ENCODE measurements at regions of chr13 and their contacts with region 1.

Region 1: DNA sequence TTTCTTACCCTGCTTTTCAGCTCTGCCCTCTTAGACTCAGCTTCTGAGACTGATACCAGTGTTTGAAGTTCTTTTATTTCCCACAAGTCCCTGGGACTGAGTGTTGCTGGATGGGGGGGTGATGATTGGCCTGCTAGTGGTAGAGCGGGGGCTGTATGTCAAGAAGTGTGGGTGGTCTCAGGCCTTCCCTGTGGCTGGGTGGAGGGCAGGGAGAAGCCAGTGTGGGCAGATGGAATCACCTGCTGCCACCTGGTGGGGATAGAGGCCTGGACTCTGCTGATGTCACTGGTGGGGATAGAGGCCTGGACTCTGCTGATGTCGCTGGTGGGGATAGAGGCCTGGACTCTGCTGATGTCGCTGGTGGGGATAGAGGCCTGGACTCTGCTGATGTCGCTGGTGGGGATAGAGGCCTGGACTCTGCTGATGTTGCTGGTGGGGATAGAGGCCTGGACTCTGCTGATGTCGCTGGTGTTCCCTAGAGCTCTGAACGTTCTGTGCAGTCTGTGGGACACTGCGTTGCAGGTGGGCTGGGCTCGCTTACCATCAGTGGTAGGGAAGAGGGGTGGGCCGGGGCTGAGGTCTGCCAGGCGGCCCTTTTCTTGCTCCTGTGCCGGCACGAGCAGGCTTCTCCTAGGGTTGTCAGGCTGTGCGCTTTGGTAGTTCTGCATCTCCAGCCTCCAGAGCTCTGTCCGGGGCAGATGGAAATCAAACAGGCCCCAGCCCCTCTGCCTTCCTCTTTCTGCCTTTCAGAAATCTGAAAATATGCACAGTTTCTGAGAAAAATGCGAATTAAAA is 101.3 kb downstream of the ARHGEF7 start:
- DNase-seq: peak in 3 of 4 donors; percentile 45 to 62 (median 47)
- ATAC-seq: peak; percentile 53
- H3K4me3 ChIP-seq: no peak overlapping the region
- H3K27ac ChIP-seq: no peak overlapping the region
- H3K4me1 ChIP-seq: peaks cover 15% of the 10 kb centered on the region
- H3K27me3 ChIP-seq: no peaks in the 10 kb centered on the region
- CTCF ChIP-seq: peak; percentile 7 to 45 (median 30)
- POLR2A ChIP-seq: no peak

Region 2: DNA sequence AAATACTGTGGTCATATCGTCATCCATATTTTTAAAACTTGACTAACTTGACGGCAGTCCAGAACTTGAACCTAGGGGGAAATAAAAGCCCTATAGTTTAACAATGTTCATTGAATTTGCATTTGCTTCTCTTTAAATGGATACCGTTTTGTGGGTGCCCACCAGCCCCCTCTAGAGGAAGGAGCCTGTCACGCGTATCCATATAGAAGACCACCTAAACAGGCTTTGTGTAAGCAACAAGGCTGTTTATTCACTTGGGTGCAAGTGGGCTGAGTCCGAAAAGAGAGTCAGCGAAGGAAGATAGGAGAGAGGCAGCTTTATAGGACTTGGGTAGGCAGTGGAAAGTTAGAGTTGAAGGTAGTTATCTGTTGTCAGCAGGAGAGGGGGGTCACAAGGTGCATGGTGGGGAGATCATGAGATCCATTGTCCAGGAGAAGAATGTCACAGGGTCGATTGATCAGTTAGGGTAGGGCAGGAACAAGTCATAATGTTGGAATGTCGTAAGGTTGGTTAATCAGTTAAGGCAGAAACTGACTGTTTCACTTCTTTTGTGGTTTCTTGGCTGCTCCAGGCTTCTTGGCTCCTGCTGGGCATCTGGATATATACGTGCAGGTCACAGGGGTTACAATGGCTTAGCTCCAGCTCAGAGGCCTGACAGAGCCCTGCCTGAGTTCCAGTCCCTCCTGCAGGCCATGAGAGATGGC is 259.0 kb before region 1 on chr13:
- intact Hi-C with region 1: no loop called
- DNase-seq: no peak
- ATAC-seq: no peak
- H3K4me3 ChIP-seq: no peak overlapping the region
- H3K27ac ChIP-seq: no peak overlapping the region
- H3K4me1 ChIP-seq: no peaks in the 10 kb centered on the region
- H3K27me3 ChIP-seq: no peaks in the 10 kb centered on the region
- CTCF ChIP-seq: no peak
- POLR2A ChIP-seq: no peak

Region 3: DNA sequence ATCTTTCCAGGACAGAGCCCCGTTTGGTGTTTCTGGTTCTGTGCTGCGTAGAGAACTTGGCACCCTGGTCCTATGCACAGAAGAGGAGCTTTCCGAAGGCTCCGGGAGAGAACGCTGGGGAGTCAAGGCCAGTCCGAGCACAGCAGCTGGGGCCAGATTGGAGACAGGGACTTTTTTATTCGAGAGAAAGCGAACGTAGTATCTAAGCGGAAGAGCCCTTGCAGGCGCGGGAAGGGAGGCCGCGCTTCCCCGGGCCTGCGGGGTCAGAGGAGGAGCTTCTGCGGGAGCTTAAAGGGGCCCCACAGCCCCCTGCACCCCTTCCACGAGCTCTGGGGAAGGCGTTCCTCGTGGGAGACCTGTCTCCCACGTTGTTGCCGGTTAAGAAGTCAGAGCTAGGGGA is 149.8 kb before region 1 on chr13:
- intact Hi-C with region 1: loop called (anchors 10 kb)
- DNase-seq: peak in 1 of 4 donors; percentile 14
- ATAC-seq: peak; percentile 22
- H3K4me3 ChIP-seq: no peak overlapping the region
- H3K27ac ChIP-seq: no peak overlapping the region
- H3K4me1 ChIP-seq: peaks cover 5% of the 10 kb centered on the region
- H3K27me3 ChIP-seq: no peaks in the 10 kb centered on the region
- CTCF ChIP-seq: no peak
- POLR2A ChIP-seq: no peak